ENCODE measurements at regions of chr2 and their contacts with region 1.

Region 1: GRCh38 chr2:169798718-169799592 is at the start of gene SSB:
- DNase-seq: peak; percentile 75 to 93 (median 83)
- ATAC-seq: peak; percentile 95
- H3K4me3 ChIP-seq: peak within 1 kb of the TSS; percentile 84
- H3K4me3 Mint-ChIP-seq: peak within 1 kb of the TSS; percentile 80 to 94 (median 90)
- H3K27ac ChIP-seq: peak within 1 kb of the TSS; percentile 95
- H3K27ac Mint-ChIP-seq: peak within 1 kb of the TSS; percentile 87 to 97 (median 94)
- H3K4me1 ChIP-seq: peaks cover 11 to 21% of the 10 kb centered on the region in 2 donors
- H3K4me1 Mint-ChIP-seq: peaks cover 10 to 50% (median 37%) of the 10 kb centered on the region in 7 donors
- H3K27me3 ChIP-seq: no peaks in the 10 kb centered on the region
- H3K27me3 Mint-ChIP-seq: peaks cover 0 to 9% (median 0%) of the 10 kb centered on the region in 5 donors
- total RNA-seq, gene SSB: 88.3 to 104 (median 102) TPM

Region 2: GRCh38 chr2:169363560-169364150 is 435.3 kb before region 1 on chr2:
- CTCF ChIA-PET with region 1: no interaction called
- POLR2A ChIA-PET with region 1: no interaction called
- intact Hi-C with region 1: loop called in 1 of 2 experiments (anchors 10 kb)
- DNase-seq: peak in 8 of 9 donors; percentile 14 to 49 (median 38)
- ATAC-seq: peak; percentile 58
- H3K4me3 ChIP-seq: peak overlapping the region; percentile 89
- H3K4me3 Mint-ChIP-seq: peak overlapping the region; percentile 87 to 98 (median 94)
- H3K27ac ChIP-seq: no peak overlapping the region
- H3K27ac Mint-ChIP-seq: peak overlapping the region in 4 of 9 donors; percentile 14 to 88 (median 55)
- H3K4me1 ChIP-seq: peaks cover 11 to 18% of the 10 kb centered on the region in 2 donors
- H3K4me1 Mint-ChIP-seq: peaks cover 17 to 37% (median 29%) of the 10 kb centered on the region in 7 donors
- H3K27me3 ChIP-seq: peaks cover 4 to 15% of the 10 kb centered on the region in 2 donors
- H3K27me3 Mint-ChIP-seq: peaks cover 42 to 60% (median 49%) of the 10 kb centered on the region in 5 donors

Region 3: GRCh38 chr2:169528271-169528701 is 270.7 kb before region 1 on chr2:
- CTCF ChIA-PET with region 1: no interaction called
- POLR2A ChIA-PET with region 1: no interaction called
- intact Hi-C with region 1: loop called in 1 of 2 experiments (anchors 10 kb)
- DNase-seq: peak; percentile 31 to 71 (median 54)
- ATAC-seq: peak; percentile 92
- H3K4me3 ChIP-seq: no peak overlapping the region
- H3K4me3 Mint-ChIP-seq: no peak overlapping the region
- H3K27ac ChIP-seq: no peak overlapping the region
- H3K27ac Mint-ChIP-seq: peak overlapping the region in 4 of 9 donors; percentile 0 to 68 (median 20)
- H3K4me1 ChIP-seq: no peaks in the 10 kb centered on the region
- H3K4me1 Mint-ChIP-seq: peaks cover 0 to 8% (median 0%) of the 10 kb centered on the region in 7 donors
- H3K27me3 ChIP-seq: no peaks in the 10 kb centered on the region
- H3K27me3 Mint-ChIP-seq: no peaks in the 10 kb centered on the region

Region 4: DNA sequence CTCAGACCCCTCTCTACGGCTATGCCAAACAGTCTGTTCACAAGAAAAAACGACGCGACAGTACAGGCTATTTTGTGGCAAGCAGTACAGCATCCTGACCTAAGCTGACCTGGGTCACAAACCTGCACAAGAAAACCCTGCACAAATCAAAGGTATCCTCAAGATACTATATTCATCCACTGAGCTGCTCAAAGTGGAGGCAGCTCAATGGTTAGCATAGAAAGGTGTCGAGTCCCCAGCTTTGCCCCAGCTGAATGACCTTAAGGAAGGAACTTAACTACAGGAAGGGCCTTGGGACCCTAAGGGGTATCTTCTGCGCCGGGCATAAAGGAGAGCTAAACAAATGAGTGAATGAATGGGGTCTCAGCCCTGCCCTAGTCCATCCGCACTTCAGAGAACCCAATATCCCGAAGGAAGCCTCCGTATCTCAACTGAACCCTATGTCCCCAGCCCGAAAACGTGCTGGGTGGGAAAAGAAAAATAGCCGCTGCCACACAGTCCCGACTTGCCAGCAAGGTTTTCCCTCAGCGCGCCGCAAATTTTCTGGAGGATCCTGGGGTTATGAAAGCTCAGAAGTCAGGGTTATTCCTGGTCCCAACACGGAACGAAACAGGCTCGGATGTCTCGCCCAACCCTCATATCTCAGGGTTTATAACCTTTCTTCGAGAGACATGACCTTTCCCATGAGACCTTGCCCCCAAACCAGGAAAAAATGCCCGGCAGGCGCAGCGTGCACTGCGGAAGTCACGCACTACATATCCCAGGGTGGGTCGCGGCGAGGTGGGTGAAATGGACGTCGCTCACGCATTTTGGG is 225.6 kb before region 1 on chr2 and contains the start of gene FASTKD1:
- CTCF ChIA-PET with region 1: no interaction called
- POLR2A ChIA-PET with region 1: interaction called, 4 read pairs
- intact Hi-C with region 1: loop called (anchors 1 kb)
- DNase-seq: peak; percentile 55 to 88 (median 76)
- ATAC-seq: peak; percentile 100
- H3K4me3 ChIP-seq: peak within 1 kb of the TSS; percentile 93
- H3K4me3 Mint-ChIP-seq: peak within 1 kb of the TSS; percentile 88 to 99 (median 94)
- H3K27ac ChIP-seq: peak within 1 kb of the TSS; percentile 80
- H3K27ac Mint-ChIP-seq: peak within 1 kb of the TSS; percentile 74 to 95 (median 91)
- H3K4me1 ChIP-seq: peaks cover 4 to 5% of the 10 kb centered on the region in 2 donors
- H3K4me1 Mint-ChIP-seq: peaks cover 14 to 32% (median 24%) of the 10 kb centered on the region in 7 donors
- H3K27me3 ChIP-seq: no peaks in the 10 kb centered on the region
- H3K27me3 Mint-ChIP-seq: peaks cover 0 to 4% (median 0%) of the 10 kb centered on the region in 5 donors
- total RNA-seq, gene FASTKD1: 13.5 to 43.5 (median 31.0) TPM

Region 5: GRCh38 chr2:169584005-169584877 is 214.7 kb before region 1 on chr2 and contains the start of gene PPIG:
- CTCF ChIA-PET with region 1: no interaction called
- POLR2A ChIA-PET with region 1: interaction called, 3 read pairs
- intact Hi-C with region 1: loop called (anchors 1 kb)
- DNase-seq: peak; percentile 71 to 90 (median 85)
- ATAC-seq: peak; percentile 94
- H3K4me3 ChIP-seq: peak within 1 kb of the TSS; percentile 89
- H3K4me3 Mint-ChIP-seq: peak within 1 kb of the TSS; percentile 90 to 100 (median 99)
- H3K27ac ChIP-seq: peak within 1 kb of the TSS; percentile 99
- H3K27ac Mint-ChIP-seq: peak within 1 kb of the TSS; percentile 97 to 100 (median 100)
- H3K4me1 ChIP-seq: peaks cover 17 to 29% of the 10 kb centered on the region in 2 donors
- H3K4me1 Mint-ChIP-seq: peaks cover 12 to 46% (median 40%) of the 10 kb centered on the region in 7 donors
- H3K27me3 ChIP-seq: no peaks in the 10 kb centered on the region
- H3K27me3 Mint-ChIP-seq: peaks cover 0 to 4% (median 0%) of the 10 kb centered on the region in 5 donors
- total RNA-seq, gene PPIG: 50.6 to 86.1 (median 73.7) TPM

Region 6: DNA sequence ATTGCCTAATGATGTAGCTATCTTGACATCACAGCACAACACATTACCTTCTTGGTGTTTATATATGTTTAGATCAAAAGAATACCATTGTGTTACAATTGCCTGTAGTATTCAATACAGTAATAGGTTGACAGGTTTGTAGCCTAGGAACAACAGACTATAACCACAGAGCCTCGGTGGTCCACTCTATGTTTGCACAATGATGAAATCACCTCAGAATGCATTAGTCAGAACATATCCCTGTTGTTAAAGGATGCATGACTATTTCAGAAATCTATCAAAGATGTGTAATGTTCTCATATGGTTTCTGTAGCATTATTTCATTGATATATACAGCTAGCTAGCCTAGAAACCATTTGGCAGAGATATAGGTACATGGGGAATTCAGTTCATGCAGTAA is 16.9 kb after region 1 on chr2:
- CTCF ChIA-PET with region 1: interaction called, 3 read pairs
- POLR2A ChIA-PET with region 1: interaction called, 3 read pairs
- intact Hi-C with region 1: loop called in 1 of 2 experiments (anchors 1 kb)
- DNase-seq: no peak
- ATAC-seq: no peak
- H3K4me3 ChIP-seq: no peak overlapping the region
- H3K4me3 Mint-ChIP-seq: no peak overlapping the region
- H3K27ac ChIP-seq: no peak overlapping the region
- H3K27ac Mint-ChIP-seq: no peak overlapping the region
- H3K4me1 ChIP-seq: peaks cover 0 to 3% of the 10 kb centered on the region in 2 donors
- H3K4me1 Mint-ChIP-seq: peaks cover 5 to 25% (median 17%) of the 10 kb centered on the region in 7 donors
- H3K27me3 ChIP-seq: no peaks in the 10 kb centered on the region
- H3K27me3 Mint-ChIP-seq: no peaks in the 10 kb centered on the region